ENCODE measurements at regions of chr5 and their contacts with region 1.

Region 1: GRCh38 chr5:101717721-101718120 is 578.4 kb downstream of the SLCO4C1 start:
- DNase-seq: no peak
- H3K4me3 ChIP-seq: no peak overlapping the region
- H3K27ac ChIP-seq: no peak overlapping the region
- H3K4me1 ChIP-seq: no peaks in the 10 kb centered on the region
- H3K27me3 ChIP-seq: no peaks in the 10 kb centered on the region
- CTCF ChIP-seq: no peak

Region 2: GRCh38 chr5:102288630-102289029 is 570.9 kb after region 1 on chr5:
- CTCF ChIA-PET with region 1: no interaction called
- POLR2A ChIA-PET with region 1: interaction called, 10 read pairs
- intact Hi-C with region 1: no loop called
- DNase-seq: no peak
- H3K4me3 ChIP-seq: no peak overlapping the region
- H3K27ac ChIP-seq: no peak overlapping the region
- H3K4me1 ChIP-seq: no peaks in the 10 kb centered on the region
- H3K27me3 ChIP-seq: no peaks in the 10 kb centered on the region
- CTCF ChIP-seq: no peak